Activated naive CD4-positive, alpha-beta T cell treated with anti-CD3 and anti-CD28 coated beads for 36 hours (primary cell): ENCODE measurements at regions of chr7 and their contacts with region 1.

Region 1: DNA sequence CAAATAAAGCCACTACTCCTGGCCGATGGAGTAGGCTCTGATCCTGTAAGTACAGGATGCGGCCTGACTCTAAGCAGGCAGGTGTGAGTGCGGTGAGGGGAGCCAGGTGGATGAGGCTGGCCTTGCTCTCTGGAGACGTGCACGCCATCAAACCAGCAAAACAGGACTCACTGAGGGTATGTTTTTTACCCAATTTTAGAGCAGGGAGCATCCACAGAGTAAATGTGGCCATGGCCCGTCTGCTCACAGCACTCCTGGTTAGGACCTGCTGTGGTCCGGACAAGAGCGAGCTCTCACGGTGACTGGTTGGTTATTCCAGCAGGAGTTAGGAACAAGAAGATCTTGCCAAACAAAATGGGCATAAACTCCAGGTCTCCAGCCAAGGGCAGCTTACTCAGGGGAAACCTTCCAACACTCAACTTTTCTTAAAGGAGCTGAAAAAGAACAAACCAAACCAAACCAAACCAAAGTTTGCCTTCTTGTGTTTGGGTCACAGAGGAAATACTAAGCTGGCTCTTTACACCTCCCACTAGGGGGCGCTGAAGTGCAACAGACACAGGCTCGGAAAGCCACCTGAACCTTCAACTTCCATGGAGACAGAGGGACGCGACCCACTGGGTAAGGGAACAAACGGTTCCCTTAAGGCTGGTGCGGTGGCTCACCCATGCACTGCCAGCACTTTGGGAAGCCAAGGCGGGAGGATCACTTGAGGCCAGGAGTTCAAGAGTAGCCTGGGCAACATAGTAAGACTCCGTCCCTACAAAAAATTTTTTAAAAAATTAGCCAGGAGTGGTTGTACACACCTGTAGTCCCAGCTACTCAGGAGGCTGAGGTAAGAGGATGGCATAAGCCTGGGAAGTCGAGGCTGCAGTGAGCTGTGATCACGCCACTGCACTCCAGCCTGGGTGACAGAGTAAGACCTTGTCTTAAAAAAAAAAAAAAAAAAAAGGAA is 122.4 kb downstream of the CLEC2L start:
- DNase-seq: peak; percentile 93
- H3K4me3 Mint-ChIP-seq: no peak overlapping the region
- H3K27ac Mint-ChIP-seq: no peak overlapping the region
- H3K4me1 Mint-ChIP-seq: peaks cover 69% of the 10 kb centered on the region
- H3K27me3 Mint-ChIP-seq: no peaks in the 10 kb centered on the region

Region 2: GRCh38 chr7:139482662-139483469 is 163.0 kb before region 1 on chr7:
- CTCF ChIA-PET with region 1: no interaction called
- intact Hi-C with region 1: no loop called
- DNase-seq: peak; percentile 49
- H3K4me3 Mint-ChIP-seq: peak overlapping the region; percentile 43
- H3K27ac Mint-ChIP-seq: no peak overlapping the region
- H3K4me1 Mint-ChIP-seq: peaks cover 2% of the 10 kb centered on the region
- H3K27me3 Mint-ChIP-seq: peaks cover 33% of the 10 kb centered on the region

Region 3: GRCh38 chr7:139620676-139621344 is 25.0 kb before region 1 on chr7:
- CTCF ChIA-PET with region 1: interaction called, 10 read pairs
- intact Hi-C with region 1: no loop called
- DNase-seq: peak; percentile 77
- H3K4me3 Mint-ChIP-seq: no peak overlapping the region
- H3K27ac Mint-ChIP-seq: no peak overlapping the region
- H3K4me1 Mint-ChIP-seq: peaks cover 21% of the 10 kb centered on the region
- H3K27me3 Mint-ChIP-seq: no peaks in the 10 kb centered on the region

Region 4: GRCh38 chr7:139673230-139673629 is 27.4 kb after region 1 on chr7:
- CTCF ChIA-PET with region 1: interaction called, 17 read pairs
- intact Hi-C with region 1: loop called (anchors 1 kb)
- DNase-seq: peak; percentile 81
- H3K4me3 Mint-ChIP-seq: peak overlapping the region; percentile 35
- H3K27ac Mint-ChIP-seq: peak overlapping the region; percentile 85
- H3K4me1 Mint-ChIP-seq: peaks cover 28% of the 10 kb centered on the region
- H3K27me3 Mint-ChIP-seq: no peaks in the 10 kb centered on the region

Region 5: GRCh38 chr7:139737221-139738100 is 91.6 kb after region 1 on chr7:
- CTCF ChIA-PET with region 1: interaction called, 5 read pairs
- intact Hi-C with region 1: loop called (anchors 2 kb)
- DNase-seq: peak; percentile 74
- H3K4me3 Mint-ChIP-seq: peak overlapping the region; percentile 38
- H3K27ac Mint-ChIP-seq: peak overlapping the region; percentile 84
- H3K4me1 Mint-ChIP-seq: peaks cover 55% of the 10 kb centered on the region
- H3K27me3 Mint-ChIP-seq: no peaks in the 10 kb centered on the region

Region 6: GRCh38 chr7:139798221-139798620 is 152.4 kb after region 1 on chr7:
- CTCF ChIA-PET with region 1: interaction called, 4 read pairs
- intact Hi-C with region 1: loop called (anchors 2 kb)
- DNase-seq: peak; percentile 69
- H3K4me3 Mint-ChIP-seq: peak overlapping the region; percentile 22
- H3K27ac Mint-ChIP-seq: no peak overlapping the region
- H3K4me1 Mint-ChIP-seq: peaks cover 14% of the 10 kb centered on the region
- H3K27me3 Mint-ChIP-seq: no peaks in the 10 kb centered on the region

Region 7: DNA sequence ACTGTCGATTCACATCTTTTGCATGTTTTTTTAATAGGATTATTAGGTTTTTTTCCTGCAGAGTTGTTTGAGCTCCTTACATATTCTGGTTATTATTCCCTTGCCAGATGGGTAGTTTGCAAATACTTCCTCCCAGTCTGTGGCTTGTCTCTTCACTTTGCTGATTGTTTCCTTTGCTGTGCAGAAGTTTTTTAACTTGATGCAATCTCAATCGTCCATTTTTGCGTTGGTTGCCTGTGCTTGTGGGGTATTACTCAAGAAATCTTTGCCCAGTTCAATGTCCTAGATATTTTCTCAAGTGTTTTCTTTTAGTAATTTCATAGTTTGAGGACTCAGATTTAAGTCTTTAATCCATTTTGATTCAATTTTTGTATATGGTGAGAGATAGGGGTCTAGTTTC is 278.6 kb after region 1 on chr7:
- CTCF ChIA-PET with region 1: no interaction called
- intact Hi-C with region 1: no loop called
- DNase-seq: no peak
- H3K4me3 Mint-ChIP-seq: no peak overlapping the region
- H3K27ac Mint-ChIP-seq: no peak overlapping the region
- H3K4me1 Mint-ChIP-seq: no peaks in the 10 kb centered on the region
- H3K27me3 Mint-ChIP-seq: no peaks in the 10 kb centered on the region

Region 8: GRCh38 chr7:140230861-140231770 is 585.3 kb after region 1 on chr7:
- CTCF ChIA-PET with region 1: no interaction called
- intact Hi-C with region 1: loop called (anchors 5 kb)
- DNase-seq: peak; percentile 85
- H3K4me3 Mint-ChIP-seq: peak overlapping the region; percentile 97
- H3K27ac Mint-ChIP-seq: peak overlapping the region; percentile 98
- H3K4me1 Mint-ChIP-seq: peaks cover 38% of the 10 kb centered on the region
- H3K27me3 Mint-ChIP-seq: no peaks in the 10 kb centered on the region